ENCODE measurements at regions of chr6 and their contacts with region 1.

Region 1: GRCh38 chr6:33375143-33375671 is 16.4 kb upstream of the KIFC1 start:
- DNase-seq: peak; percentile 82

Region 2: DNA sequence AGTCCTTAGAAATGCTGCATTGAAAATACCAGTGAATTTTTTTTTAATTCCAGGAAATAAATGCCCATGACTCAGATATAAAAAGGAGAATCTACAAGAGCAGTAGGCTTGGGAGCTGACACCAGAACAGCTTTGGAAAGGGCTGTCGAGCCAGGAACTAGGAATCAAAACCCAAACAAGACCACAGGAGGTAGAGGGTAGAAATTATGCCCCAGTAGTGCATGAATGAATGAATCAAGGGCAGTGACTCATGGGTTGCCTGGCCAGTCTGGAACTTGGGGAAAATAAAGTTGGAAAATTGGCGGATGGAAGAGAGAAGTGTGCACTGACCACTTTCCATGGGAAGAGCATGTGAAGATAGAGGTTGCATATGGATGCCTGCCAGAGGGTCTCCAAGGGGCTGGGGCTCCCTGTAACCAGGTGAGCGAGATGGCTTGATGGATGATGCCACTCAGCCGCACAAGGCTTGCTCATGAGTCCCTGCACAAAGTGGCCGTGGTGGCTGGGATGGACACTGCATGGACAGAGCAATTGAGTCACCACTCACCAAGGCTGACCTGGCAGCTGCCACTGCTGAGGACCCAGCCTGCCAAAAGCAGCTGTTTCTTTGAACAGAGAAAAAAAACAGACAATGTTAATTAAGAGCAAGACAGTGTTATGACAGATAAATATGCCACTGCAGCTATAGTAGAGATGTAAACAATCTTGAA is 1861.6 kb before region 1 on chr6:
- intact Hi-C with region 1: loop called in 1 of 2 experiments (anchors 5 kb)
- DNase-seq: no peak

Region 3: DNA sequence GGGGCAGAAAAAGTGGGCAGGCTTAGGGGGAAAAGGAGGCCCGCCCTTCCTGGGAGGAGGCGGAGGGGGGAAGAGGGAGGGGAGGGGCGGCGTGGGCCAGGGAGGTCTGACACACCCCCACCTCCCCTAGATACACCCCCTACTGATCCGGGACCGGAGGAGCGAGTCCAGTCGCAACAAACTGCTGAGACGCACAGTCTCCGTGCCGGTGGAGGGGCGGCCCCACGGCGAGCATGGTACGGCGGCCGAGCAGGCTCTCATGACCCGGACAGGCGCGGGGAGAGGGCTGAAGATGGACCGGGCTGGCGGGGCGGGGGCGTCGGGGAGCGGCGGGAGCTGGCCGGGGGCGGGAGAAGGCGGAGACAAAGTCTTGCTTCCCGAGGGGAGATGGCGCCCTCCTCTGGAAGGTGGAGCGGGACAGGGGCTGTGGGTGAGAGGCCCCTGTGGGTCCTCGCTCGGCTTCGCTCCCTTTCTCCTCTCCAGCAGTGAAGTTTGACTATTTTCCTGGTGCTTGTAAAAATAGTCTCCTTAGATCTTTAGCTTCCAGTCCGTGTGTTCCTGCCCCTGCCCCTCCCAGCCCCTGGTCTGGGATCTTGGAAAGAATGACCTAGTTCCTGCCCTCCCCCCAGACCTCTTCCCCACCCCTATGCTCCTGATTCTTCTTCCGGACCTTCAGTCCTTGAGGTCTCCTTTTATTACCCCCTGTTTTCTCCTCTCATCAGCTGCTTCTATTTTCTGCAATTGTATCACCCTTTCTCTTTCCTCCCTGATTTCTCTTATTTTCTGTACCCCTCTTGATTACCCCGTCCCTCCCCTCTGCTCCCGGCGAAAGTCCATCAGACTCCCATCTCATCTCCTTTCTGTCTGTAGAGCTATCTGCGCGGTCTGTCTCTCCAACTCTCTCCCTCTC is 50.7 kb after region 1 on chr6:
- intact Hi-C with region 1: no loop called
- DNase-seq: peak; percentile 96

Measured in posterior vena cava (tissue), 2 donors.